ENCODE measurements at regions of chr10 and their contacts with region 1.

Region 1: GRCh38 chr10:63166742-63167258 is 33.7 kb downstream of the NRBF2 start:
- DNase-seq: no peak
- H3K4me3 ChIP-seq: no peak overlapping the region
- H3K27ac ChIP-seq: peak overlapping the region in 1 of 4 donors; percentile 19
- H3K4me1 ChIP-seq: peaks cover 0 to 12% (median 0%) of the 10 kb centered on the region in 4 donors
- H3K27me3 ChIP-seq: no peaks in the 10 kb centered on the region
- CTCF ChIP-seq: peak; percentile 61 to 83 (median 80)
- EP300 ChIP-seq: no peak
- POLR2A ChIP-seq: no peak

Region 2: DNA sequence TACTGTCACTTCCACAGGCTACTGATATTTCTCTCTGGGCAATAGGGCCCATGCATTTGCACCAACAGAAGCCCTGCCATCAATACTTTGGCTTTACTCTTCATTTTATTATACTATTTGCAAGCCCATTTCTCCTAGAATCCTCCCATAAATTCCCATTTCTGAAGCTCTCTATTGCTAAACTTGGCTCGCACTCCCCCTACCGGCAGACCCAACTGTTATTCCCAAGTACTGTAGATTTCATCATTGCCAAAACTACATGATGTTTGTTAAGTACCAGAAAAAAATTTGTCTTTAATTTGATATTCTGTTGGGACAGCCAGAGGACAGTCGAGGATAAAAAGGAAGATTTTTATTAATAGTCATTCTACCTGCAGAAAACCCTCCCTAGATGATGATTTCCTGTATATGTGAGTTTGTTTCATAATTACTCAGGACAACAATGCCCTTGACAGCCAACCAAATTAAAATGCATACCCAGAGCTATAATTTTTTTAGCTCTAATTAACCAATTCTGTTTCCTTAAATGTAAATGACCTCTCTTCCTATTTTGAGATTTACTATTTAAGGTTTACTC is 653.0 kb after region 1 on chr10:
- in situ Hi-C with region 1: no loop called
- intact Hi-C with region 1: loop called (anchors 10 kb)
- DNase-seq: peak; percentile 55
- H3K4me3 ChIP-seq: no peak overlapping the region
- H3K27ac ChIP-seq: no peak overlapping the region
- H3K4me1 ChIP-seq: no peaks in the 10 kb centered on the region
- H3K27me3 ChIP-seq: no peaks in the 10 kb centered on the region
- CTCF ChIP-seq: peak; percentile 55 to 68 (median 66)
- EP300 ChIP-seq: no peak
- POLR2A ChIP-seq: no peak

Measured in transverse colon (tissue), 4 donors.